Right ventricle myocardium inferior (tissue), 1 donor: ENCODE measurements at regions of chr12 and their contacts with region 1.

Region 1: GRCh38 chr12:6752921-6753771 is at the start of gene MLF2:
- DNase-seq: peak; percentile 98
- ATAC-seq: peak; percentile 97
- total RNA-seq, gene MLF2: 156 TPM

Region 2: GRCh38 chr12:6167327-6168259 is 585.6 kb before region 1 on chr12:
- intact Hi-C with region 1: no loop called
- DNase-seq: no peak
- ATAC-seq: peak; percentile 71

Region 3: GRCh38 chr12:6688999-6689882 is 63.9 kb before region 1 on chr12 and contains the start of gene ZNF384:
- intact Hi-C with region 1: loop called (anchors 1 kb)
- DNase-seq: peak; percentile 97
- ATAC-seq: peak; percentile 94
- total RNA-seq, gene ZNF384: 26.0 TPM

Region 4: DNA sequence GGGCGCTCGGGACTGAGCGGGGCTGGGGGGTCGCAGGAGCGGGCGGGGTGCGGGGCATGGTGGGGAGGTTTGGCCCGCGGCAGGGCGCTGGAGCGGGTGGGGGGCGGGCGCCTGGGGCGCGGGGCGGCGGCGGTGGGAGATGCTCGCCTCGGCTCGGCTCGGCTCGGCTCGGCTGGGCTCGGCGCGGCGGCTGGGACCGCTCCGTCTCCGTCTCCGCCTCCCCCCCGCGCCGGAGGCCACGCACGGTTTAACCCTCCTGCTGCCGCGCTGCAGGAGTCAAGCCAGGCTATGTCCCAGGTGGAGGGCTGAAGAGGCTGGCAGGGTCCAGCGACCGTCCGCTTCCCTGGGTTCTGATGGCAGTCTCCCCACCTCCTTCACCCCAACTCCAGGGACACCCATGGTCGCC is 52.5 kb before region 1 on chr12 and contains the start of gene PIANP:
- intact Hi-C with region 1: no loop called
- DNase-seq: no peak
- ATAC-seq: peak; percentile 68
- total RNA-seq, gene PIANP: 0.27 TPM

Region 5: DNA sequence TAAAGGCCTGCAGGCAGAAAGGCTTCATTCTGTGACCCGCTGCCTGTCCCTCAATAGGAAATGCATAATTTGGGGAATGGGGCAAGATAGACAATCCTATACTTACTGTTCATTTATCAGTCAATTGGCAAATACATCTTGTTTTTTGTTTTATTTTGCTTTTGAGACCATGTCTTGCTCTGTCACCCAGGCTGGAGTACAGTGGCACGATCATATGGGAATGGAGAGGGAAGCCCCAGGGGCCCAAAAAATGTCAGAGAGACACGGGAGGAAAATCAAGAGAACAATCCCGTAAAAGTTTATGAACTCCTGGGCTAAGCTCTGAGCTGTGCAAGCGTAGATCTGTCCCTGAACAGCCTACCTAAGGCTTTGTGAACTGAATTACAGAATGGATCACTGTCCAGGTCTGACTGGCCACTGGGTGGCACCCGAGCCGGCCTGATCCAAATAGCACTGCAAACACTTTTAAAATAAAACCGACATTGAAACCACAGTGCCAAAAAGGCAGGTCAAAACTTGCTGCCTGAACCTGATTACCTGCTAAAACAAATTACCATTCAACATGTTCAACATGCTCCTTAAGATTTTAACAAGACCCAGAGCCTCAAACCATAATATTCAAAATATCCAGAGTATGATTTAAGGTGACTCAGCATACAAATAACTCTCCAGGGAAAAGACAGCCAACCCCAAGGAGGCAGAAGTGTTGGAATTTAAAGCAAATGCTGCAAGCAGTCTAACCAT is 17.5 kb before region 1 on chr12:
- intact Hi-C with region 1: loop called (anchors 2 kb)
- DNase-seq: peak; percentile 82
- ATAC-seq: peak; percentile 80

Region 6: GRCh38 chr12:6766651-6767349 is 13.7 kb after region 1 on chr12:
- intact Hi-C with region 1: loop called (anchors 1 kb)
- DNase-seq: peak; percentile 91
- ATAC-seq: peak; percentile 46

Region 7: DNA sequence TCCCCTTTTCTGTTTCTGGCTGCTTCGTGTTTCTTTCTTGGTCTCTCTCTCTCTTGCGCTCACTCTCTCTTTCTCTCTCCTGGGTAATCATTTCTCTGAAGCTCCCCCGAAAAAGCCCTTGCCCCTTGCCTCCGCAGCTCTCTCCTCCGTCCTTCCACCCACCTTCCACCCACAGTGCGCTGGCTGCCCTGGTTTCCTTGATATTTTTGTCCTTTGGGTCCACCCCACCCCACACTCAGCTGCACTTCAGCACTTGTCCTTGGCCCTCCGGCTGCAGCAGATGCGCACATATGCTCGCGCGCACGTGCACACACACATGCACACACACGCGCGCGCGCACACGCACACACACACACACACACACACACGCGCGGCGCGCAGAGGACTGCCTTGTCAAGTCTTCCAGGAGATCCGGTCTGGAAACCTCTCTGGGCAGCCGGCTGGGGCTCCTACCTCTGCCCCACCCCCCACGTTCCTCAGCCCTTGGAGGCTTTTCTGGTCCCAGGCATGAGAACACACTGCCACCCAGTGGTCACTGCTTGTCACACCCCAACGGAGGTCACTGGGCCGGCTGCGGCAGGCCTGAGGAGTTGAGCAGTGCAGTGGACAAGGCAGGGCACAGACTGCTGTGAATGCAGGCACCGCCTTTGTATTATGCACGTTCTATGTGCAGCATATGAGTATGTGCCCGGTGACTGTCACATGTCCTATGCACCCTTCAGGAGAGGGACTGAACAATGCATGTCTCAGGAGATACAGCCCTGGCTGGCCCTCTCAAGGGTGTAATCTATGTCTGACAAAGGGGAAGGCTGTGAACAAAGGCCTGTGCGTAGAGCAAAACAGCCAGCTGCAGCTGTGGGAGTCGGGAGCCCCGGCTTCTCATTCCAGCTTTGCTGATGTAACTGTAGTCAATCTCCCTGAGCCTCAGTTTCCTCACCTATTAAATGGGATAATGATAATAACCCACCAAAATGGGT is 25.7 kb after region 1 on chr12:
- intact Hi-C with region 1: loop called (anchors 1 kb)
- DNase-seq: peak; percentile 94
- ATAC-seq: peak; percentile 97

Region 8: GRCh38 chr12:6792522-6793201 is 39.5 kb after region 1 on chr12:
- intact Hi-C with region 1: loop called (anchors 1 kb)
- DNase-seq: peak; percentile 81
- ATAC-seq: peak; percentile 70

Region 9: DNA sequence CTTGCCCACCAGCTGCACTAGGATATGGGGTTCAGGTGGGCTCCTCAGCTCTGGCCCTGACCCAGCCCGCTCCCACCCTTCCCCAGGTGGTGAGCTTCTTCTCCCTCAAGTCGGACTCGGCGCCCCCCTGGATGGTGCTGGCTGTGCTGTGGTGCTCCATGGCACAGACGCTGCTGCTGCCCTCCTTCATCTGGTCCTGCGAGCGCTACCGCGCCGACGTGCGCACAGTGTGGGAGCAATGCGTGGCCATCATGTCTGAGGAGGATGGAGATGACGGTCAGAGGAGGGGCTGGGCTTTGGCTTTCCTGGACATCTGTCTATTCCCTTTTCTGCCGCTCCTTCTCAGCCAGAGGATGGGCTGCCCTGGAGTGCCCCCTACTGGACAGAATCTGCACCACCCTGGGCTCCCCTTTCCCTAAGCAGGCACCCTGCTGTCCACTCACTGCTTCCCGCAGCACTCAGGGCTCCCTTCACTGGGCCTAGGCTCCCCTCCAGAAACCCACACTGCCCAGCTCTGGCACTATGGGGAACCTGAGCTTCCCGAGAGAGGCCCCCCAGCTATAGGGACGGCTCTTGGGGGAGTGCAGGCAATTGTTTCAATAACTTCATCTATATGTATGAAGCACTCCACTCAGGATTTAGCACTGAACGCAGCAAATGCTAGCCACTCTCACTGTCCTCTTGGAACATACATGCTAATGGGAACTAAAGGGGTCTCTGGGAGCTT is 72.4 kb after region 1 on chr12:
- intact Hi-C with region 1: loop called (anchors 1 kb)
- DNase-seq: peak; percentile 89
- ATAC-seq: peak; percentile 58

Region 10: GRCh38 chr12:6904280-6905278 is 151.4 kb after region 1 on chr12 and contains the start of gene LRRC23:
- intact Hi-C with region 1: no loop called
- DNase-seq: peak; percentile 98
- ATAC-seq: peak; percentile 98
- total RNA-seq, gene LRRC23: 9.4 TPM